Activated B cell treated with CpG ODN at 0.5 μM for 24 hours (primary cell): ENCODE measurements at regions of chr3 and their contacts with region 1.

Region 1: DNA sequence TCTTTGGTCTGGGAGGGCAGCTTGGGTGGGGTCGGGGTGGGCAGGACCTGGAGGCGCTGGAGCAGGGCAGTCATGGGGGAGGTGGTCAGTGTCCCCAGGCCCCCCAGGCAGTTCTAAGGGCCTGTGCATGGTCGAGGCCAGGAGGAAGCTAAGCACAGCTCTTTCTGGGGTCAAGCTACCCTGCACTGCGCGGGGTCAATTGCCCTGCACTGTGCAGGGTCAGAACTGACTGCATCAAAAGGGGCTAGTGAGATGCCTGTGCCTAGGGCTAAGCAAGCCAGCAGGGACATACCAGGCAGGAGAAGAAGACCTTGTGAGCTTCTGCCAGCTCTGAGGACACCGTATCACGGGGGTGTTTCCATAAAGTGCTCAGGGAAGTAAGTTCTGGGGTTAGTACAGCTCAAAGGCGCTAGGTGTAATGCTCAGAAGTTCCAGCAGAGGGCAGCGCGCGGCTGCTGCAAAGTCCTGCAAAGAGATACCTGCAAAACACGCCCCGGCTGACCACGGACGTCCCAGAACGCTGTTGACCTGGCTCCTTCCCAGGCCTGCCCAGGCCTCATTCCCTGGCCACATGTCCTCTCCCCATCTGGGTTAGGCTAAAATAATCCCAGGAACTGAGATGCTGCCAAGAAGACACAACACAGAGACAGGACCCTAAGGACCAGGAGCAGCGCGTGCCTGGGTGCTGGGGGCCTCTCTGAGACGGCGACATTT is 18.8 kb upstream of the IQSEC1 start:
- DNase-seq: peak; percentile 80
- ATAC-seq: peak; percentile 49
- H3K4me3 Mint-ChIP-seq: no peak overlapping the region
- H3K27ac Mint-ChIP-seq: peak overlapping the region; percentile 35
- H3K4me1 Mint-ChIP-seq: peaks cover 71% of the 10 kb centered on the region
- H3K27me3 Mint-ChIP-seq: peaks cover 10% of the 10 kb centered on the region
- CTCF ChIP-seq: peak; percentile 33

Region 2: GRCh38 chr3:13012228-13012691 is 79.8 kb before region 1 on chr3:
- CTCF ChIA-PET with region 1: interaction called, 4 read pairs
- POLR2A ChIA-PET with region 1: interaction called, 291 read pairs
- intact Hi-C with region 1: loop called (anchors 1 kb)
- DNase-seq: no peak
- ATAC-seq: peak; percentile 36
- H3K4me3 Mint-ChIP-seq: peak overlapping the region; percentile 87
- H3K27ac Mint-ChIP-seq: peak overlapping the region; percentile 95
- H3K4me1 Mint-ChIP-seq: peaks cover 98% of the 10 kb centered on the region
- H3K27me3 Mint-ChIP-seq: no peaks in the 10 kb centered on the region
- CTCF ChIP-seq: no peak

Region 3: DNA sequence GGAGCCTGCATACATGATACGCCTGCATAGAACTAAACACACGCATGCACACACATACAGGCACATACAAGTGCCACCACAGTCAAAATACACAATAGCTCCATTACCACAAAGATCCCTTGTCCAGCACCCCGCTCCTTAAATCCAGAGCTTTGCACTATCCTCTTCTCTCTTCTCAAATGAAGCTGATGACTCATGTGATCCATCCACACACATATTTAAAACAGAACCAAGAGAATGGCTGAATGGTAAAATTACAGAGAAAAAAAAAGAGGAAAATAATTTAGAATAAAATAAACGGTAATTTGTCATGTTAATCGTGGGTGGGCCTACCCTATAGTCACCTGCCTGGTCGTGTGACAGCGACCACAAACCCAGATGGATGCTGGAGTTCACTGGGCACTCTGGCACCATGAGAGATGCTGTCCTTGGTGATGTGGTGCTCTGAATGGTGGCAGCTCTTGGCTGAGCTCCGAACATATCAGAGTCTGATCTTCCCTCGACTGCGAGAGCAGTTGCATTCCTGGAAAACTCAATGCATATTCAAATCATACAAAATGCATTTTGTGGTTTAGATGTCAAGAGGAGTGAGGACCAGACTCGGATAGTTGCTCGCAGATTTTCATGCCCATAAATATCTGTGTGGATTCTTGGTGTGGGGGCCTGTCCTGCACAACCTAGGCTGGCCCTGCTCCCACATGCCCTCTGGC is 27.7 kb before region 1 on chr3:
- CTCF ChIA-PET with region 1: interaction called, 12 read pairs
- POLR2A ChIA-PET with region 1: interaction called, 7 read pairs
- intact Hi-C with region 1: no loop called
- DNase-seq: no peak
- ATAC-seq: no peak
- H3K4me3 Mint-ChIP-seq: no peak overlapping the region
- H3K27ac Mint-ChIP-seq: no peak overlapping the region
- H3K4me1 Mint-ChIP-seq: peaks cover 62% of the 10 kb centered on the region
- H3K27me3 Mint-ChIP-seq: no peaks in the 10 kb centered on the region
- CTCF ChIP-seq: no peak

Region 4: DNA sequence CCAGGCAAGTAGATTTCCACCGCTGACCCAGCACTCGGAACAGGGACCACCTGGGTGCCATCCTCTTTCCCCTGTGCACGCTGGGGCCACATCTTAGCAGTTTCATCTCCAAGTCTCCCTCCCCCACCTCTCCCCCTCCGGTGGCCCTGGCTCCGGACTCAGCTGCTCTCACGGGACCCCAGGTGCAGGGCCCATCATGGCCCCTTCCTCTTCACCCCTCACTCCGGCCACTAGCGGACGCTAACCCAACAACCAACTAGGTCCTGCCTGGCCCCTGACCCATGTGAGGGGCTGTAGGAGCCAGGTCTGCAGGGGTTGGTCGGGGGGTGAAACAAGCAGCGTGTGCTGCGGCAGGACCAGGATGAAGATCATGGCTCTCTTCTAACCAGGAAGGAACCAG is 12.5 kb after region 1 on chr3:
- CTCF ChIA-PET with region 1: interaction called, 12 read pairs
- POLR2A ChIA-PET with region 1: interaction called, 3 read pairs
- intact Hi-C with region 1: no loop called
- DNase-seq: no peak
- ATAC-seq: no peak
- H3K4me3 Mint-ChIP-seq: no peak overlapping the region
- H3K27ac Mint-ChIP-seq: no peak overlapping the region
- H3K4me1 Mint-ChIP-seq: peaks cover 4% of the 10 kb centered on the region
- H3K27me3 Mint-ChIP-seq: no peaks in the 10 kb centered on the region
- CTCF ChIP-seq: no peak

Region 5: DNA sequence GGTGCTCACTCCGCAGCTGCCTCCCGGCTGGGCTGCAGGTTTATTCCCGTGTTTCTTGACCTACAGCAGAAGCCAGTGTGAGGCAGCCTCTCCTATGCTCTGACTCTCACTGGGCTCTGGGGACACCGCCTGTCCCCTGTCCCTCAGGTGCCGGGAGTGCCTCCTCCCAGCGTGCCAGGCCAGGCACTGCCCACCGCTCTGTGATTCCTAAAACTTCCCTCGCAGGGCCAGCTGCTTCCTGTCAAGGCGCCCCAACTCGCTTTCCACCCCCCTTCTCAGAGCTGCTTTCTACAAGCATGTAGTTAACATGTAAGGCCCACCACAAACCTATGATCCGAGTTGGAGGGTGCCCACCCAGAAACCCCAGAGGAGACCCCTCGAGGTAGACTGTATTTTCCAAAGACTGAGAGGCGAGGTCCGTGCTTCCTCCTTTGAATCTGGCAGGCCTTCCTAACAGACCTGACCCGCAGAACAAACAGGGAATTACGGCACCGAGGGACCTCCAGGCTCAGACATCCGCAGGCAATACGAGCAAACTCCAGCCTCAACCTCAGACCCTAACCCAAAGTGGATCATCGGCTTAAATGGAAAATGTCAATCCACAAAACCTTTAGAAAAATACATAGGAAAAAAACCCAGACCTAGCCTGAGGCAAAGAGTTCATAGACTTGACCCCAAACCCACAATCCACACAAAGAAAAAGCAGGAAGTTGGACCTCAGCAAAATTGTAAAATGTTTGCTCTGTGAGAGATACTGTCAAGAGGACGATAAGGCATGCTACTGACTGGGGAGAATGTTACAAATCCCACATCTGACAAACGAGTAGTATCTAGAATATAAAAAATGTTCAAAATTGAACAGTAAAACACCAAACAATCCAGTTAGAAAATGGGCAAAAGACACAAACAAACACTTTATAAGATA is 102.5 kb after region 1 on chr3:
- CTCF ChIA-PET with region 1: interaction called, 3 read pairs
- POLR2A ChIA-PET with region 1: no interaction called
- intact Hi-C with region 1: loop called (anchors 5 kb)
- DNase-seq: no peak
- ATAC-seq: no peak
- H3K4me3 Mint-ChIP-seq: no peak overlapping the region
- H3K27ac Mint-ChIP-seq: no peak overlapping the region
- H3K4me1 Mint-ChIP-seq: peaks cover 21% of the 10 kb centered on the region
- H3K27me3 Mint-ChIP-seq: peaks cover 22% of the 10 kb centered on the region
- CTCF ChIP-seq: no peak

Region 6: GRCh38 chr3:13282986-13283876 is 191.2 kb after region 1 on chr3:
- CTCF ChIA-PET with region 1: interaction called, 23 read pairs
- POLR2A ChIA-PET with region 1: no interaction called
- intact Hi-C with region 1: loop called (anchors 1 kb)
- DNase-seq: peak; percentile 33
- ATAC-seq: peak; percentile 75
- H3K4me3 Mint-ChIP-seq: peak overlapping the region; percentile 78
- H3K27ac Mint-ChIP-seq: no peak overlapping the region
- H3K4me1 Mint-ChIP-seq: peaks cover 15% of the 10 kb centered on the region
- H3K27me3 Mint-ChIP-seq: peaks cover 43% of the 10 kb centered on the region
- CTCF ChIP-seq: no peak

Region 7: GRCh38 chr3:13346481-13347389 is 254.7 kb after region 1 on chr3:
- CTCF ChIA-PET with region 1: interaction called, 9 read pairs
- POLR2A ChIA-PET with region 1: no interaction called
- intact Hi-C with region 1: loop called (anchors 1 kb)
- DNase-seq: no peak
- ATAC-seq: peak; percentile 56
- H3K4me3 Mint-ChIP-seq: no peak overlapping the region
- H3K27ac Mint-ChIP-seq: peak overlapping the region; percentile 41
- H3K4me1 Mint-ChIP-seq: peaks cover 15% of the 10 kb centered on the region
- H3K27me3 Mint-ChIP-seq: no peaks in the 10 kb centered on the region
- CTCF ChIP-seq: no peak

Region 8: DNA sequence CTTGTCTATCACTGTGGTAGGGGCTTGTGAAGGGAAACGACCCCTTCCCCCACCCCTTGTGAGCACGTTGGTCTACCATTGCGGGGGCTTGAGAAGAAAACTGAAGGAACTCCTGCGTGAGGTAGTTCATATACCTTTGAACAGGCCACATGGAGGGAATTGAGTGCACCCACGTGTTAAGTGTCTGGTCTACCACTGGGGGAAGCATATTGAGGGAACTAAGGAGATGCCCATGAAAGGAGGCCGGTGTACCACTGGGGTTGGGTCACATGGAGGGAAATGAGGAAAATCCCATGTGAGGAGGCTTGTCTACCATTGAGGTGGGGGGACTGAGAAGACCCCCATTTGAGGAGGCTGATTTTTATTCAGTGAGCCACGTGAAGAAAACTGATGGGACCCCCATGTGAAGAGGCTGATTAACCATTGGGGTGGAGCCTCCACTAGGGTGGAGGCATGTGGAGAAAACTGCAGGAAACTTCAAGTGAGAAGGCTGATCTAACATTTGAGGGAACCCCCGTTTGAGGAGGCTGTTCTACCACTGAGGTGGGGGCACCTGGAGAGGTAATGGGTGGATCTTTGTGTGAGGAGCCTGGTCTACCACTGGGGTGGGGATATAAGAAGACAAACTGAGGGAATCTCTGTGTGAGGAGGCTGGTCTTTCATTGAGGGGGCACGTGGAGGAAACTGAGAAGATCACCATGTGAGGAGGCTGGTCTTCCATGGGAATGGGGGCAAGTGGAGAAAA is 620.0 kb after region 1 on chr3:
- CTCF ChIA-PET with region 1: no interaction called
- POLR2A ChIA-PET with region 1: no interaction called
- intact Hi-C with region 1: no loop called
- DNase-seq: peak; percentile 6
- ATAC-seq: no peak
- H3K4me3 Mint-ChIP-seq: no peak overlapping the region
- H3K27ac Mint-ChIP-seq: no peak overlapping the region
- H3K4me1 Mint-ChIP-seq: no peaks in the 10 kb centered on the region
- H3K27me3 Mint-ChIP-seq: peaks cover 11% of the 10 kb centered on the region
- CTCF ChIP-seq: no peak